Left ventricle myocardium inferior (tissue), 1 donor: ENCODE measurements at regions of chr1 and their contacts with region 1.

Region 1: GRCh38 chr1:236103646-236104218 is 38.6 kb upstream of the GPR137B start:
- DNase-seq: no peak
- H3K4me3 ChIP-seq: no peak overlapping the region
- H3K27ac ChIP-seq: no peak overlapping the region
- H3K4me1 ChIP-seq: no peaks in the 10 kb centered on the region
- H3K27me3 ChIP-seq: peaks cover 4% of the 10 kb centered on the region
- CTCF ChIP-seq: peak; percentile 86

Region 2: GRCh38 chr1:236774926-236775325 is 671.2 kb after region 1 on chr1:
- intact Hi-C with region 1: loop called (anchors 10 kb)
- DNase-seq: no peak
- H3K4me3 ChIP-seq: no peak overlapping the region
- H3K27ac ChIP-seq: no peak overlapping the region
- H3K4me1 ChIP-seq: no peaks in the 10 kb centered on the region
- H3K27me3 ChIP-seq: peaks cover 4% of the 10 kb centered on the region
- CTCF ChIP-seq: peak; percentile 57